Caco-2 (cell line): ENCODE measurements at regions of chr10 and their contacts with region 1.

Region 1: DNA sequence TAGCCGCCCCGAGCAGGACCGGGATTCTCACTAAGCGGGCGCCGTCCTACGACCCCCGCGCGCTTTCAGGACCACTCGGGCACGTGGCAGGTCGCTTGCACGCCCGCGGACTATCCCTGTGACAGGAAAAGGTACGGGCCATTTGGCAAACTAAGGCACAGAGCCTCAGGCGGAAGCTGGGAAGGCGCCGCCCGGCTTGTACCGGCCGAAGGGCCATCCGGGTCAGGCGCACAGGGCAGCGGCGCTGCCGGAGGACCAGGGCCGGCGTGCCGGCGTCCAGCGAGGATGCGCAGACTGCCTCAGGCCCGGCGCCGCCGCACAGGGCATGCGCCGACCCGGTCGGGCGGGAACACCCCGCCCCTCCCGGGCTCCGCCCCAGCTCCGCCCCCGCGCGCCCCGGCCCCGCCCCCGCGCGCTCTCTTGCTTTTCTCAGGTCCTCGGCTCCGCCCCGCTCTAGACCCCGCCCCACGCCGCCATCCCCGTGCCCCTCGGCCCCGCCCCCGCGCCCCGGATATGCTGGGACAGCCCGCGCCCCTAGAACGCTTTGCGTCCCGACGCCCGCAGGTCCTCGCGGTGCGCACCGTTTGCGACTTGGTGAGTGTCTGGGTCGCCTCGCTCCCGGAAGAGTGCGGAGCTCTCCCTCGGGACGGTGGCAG is at the start of gene MGMT:
- DNase-seq: peak; percentile 96
- H3K4me3 ChIP-seq: peak within 1 kb of the TSS; percentile 88
- H3K4me3 Mint-ChIP-seq: peak within 1 kb of the TSS; percentile 82
- H3K27ac Mint-ChIP-seq: peak within 1 kb of the TSS; percentile 70
- H3K4me1 ChIP-seq: peaks cover 67% of the 10 kb centered on the region
- H3K4me1 Mint-ChIP-seq: peaks cover 39% of the 10 kb centered on the region
- H3K27me3 ChIP-seq: no peaks in the 10 kb centered on the region
- H3K27me3 Mint-ChIP-seq: no peaks in the 10 kb centered on the region
- CTCF ChIP-seq: no peak
- total RNA-seq, gene MGMT: 49.3 and 57.0 TPM in 2 replicates

Region 2: DNA sequence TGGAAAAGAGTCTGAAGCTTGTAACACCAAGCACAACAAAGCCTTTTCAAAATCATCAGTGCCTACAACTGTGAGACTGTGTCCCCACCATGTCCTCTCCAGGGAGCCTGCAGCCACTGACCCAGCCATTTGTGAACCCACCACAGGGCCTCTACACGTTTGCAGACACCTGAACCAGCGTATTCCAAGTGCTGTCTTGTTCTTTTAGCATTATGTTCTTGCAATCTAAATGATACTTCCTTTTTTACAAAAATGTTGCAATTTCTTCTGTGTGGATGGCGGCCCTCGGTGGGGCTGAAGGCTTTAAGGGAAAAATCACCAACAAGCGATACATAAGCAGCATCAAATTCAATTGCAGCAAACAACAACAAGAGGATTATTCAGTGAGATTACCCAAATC is 403.0 kb before region 1 on chr10:
- CTCF ChIA-PET with region 1: no interaction called
- POLR2A ChIA-PET with region 1: interaction called, 20 read pairs
- intact Hi-C with region 1: no loop called
- DNase-seq: no peak
- H3K4me3 ChIP-seq: no peak overlapping the region
- H3K4me3 Mint-ChIP-seq: no peak overlapping the region
- H3K27ac Mint-ChIP-seq: no peak overlapping the region
- H3K4me1 ChIP-seq: no peaks in the 10 kb centered on the region
- H3K4me1 Mint-ChIP-seq: no peaks in the 10 kb centered on the region
- H3K27me3 ChIP-seq: no peaks in the 10 kb centered on the region
- H3K27me3 Mint-ChIP-seq: peaks cover 6% of the 10 kb centered on the region
- CTCF ChIP-seq: no peak

Region 3: GRCh38 chr10:129426606-129427005 is 40.2 kb before region 1 on chr10:
- CTCF ChIA-PET with region 1: no interaction called
- POLR2A ChIA-PET with region 1: no interaction called
- intact Hi-C with region 1: loop called (anchors 2 kb)
- DNase-seq: peak in 1 of 2 experiments; percentile 29
- H3K4me3 ChIP-seq: no peak overlapping the region
- H3K4me3 Mint-ChIP-seq: no peak overlapping the region
- H3K27ac Mint-ChIP-seq: peak overlapping the region; percentile 71
- H3K4me1 ChIP-seq: peaks cover 15% of the 10 kb centered on the region
- H3K4me1 Mint-ChIP-seq: peaks cover 5% of the 10 kb centered on the region
- H3K27me3 ChIP-seq: no peaks in the 10 kb centered on the region
- H3K27me3 Mint-ChIP-seq: no peaks in the 10 kb centered on the region
- CTCF ChIP-seq: no peak

Region 4: DNA sequence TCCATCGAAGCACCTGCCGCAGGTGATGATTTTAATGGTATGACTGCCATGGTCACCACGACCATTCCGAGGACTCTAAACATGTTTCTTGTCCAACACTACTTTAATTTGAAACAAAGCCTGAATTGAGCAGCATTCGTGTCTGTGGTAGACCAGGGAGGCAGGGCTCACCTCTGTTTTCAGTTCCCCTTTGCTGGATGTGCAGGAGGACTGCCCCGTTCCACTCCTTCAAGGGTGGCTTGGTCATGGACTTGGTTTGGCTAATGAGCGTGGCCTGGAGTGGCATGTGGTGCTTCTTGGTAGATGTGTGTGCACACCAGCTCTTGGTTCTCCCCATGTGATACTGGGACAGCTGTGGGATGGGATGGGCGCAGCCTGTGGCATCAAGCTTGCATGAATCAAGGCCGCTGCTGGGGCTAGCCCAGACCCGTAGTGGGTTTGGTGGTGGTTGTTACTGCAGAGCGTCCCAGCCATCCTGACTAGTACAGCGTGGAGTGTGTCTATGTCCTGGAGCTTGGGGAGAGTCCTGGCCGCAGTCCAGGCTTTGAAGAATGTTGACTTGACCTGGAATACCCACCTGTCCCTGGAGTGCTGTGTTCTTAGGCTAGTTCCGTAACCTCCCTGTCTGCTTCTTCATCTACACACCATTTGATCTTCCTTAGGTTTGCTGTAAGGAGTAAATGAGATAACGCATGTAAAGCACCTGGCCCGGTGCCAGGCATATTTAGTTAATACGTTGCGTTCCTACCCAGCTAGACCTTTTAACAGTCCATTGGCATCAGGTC is 35.0 kb after region 1 on chr10:
- CTCF ChIA-PET with region 1: no interaction called
- POLR2A ChIA-PET with region 1: interaction called, 7 read pairs
- intact Hi-C with region 1: loop called (anchors 5 kb)
- DNase-seq: no peak
- H3K4me3 ChIP-seq: no peak overlapping the region
- H3K4me3 Mint-ChIP-seq: no peak overlapping the region
- H3K27ac Mint-ChIP-seq: no peak overlapping the region
- H3K4me1 ChIP-seq: peaks cover 45% of the 10 kb centered on the region
- H3K4me1 Mint-ChIP-seq: peaks cover 15% of the 10 kb centered on the region
- H3K27me3 ChIP-seq: no peaks in the 10 kb centered on the region
- H3K27me3 Mint-ChIP-seq: no peaks in the 10 kb centered on the region
- CTCF ChIP-seq: no peak

Region 5: DNA sequence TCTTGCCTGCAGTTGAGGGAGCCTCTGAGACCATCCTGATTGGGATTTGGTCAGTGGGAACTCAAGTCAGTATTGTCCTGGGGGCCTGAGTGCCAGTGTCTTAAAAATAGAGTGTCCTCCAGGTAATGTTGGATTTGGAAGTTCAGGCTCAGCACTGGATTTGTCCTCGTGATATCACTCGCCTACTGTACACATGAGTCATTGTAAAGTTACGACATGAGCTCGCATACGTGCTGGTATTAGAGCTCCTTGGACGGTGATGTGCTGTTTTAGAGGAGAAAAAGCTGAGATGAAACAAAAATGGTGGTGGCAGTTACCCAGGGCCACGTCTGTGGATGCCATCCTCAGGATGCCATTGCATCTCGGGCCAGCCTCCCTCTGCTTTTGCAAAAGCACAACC is 78.4 kb after region 1 on chr10:
- CTCF ChIA-PET with region 1: no interaction called
- POLR2A ChIA-PET with region 1: no interaction called
- intact Hi-C with region 1: loop called (anchors 5 kb)
- DNase-seq: peak in 1 of 2 experiments; percentile 16
- H3K4me3 ChIP-seq: no peak overlapping the region
- H3K4me3 Mint-ChIP-seq: no peak overlapping the region
- H3K27ac Mint-ChIP-seq: peak overlapping the region; percentile 68
- H3K4me1 ChIP-seq: peaks cover 37% of the 10 kb centered on the region
- H3K4me1 Mint-ChIP-seq: peaks cover 33% of the 10 kb centered on the region
- H3K27me3 ChIP-seq: no peaks in the 10 kb centered on the region
- H3K27me3 Mint-ChIP-seq: no peaks in the 10 kb centered on the region
- CTCF ChIP-seq: no peak

Region 6: DNA sequence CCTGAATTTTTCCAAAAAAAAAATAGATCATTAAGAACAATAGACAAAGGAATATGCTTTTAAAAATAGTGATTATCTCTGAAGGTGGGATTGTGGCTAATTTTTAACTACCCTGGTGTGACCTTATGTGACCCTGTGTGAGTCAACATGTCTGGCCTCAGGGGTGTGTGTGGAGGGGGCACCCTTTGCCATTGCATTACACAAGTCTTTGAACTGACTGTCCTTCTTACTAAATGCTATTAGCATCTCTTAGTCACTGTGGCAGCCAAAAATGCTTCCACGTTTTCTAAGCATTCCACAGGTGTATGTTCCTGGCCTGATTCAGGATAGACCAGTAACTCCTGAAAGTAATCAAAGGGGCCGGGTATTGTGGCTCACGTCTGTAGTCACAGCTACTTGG is 175.6 kb after region 1 on chr10:
- CTCF ChIA-PET with region 1: no interaction called
- POLR2A ChIA-PET with region 1: no interaction called
- intact Hi-C with region 1: loop called (anchors 1 kb)
- DNase-seq: peak; percentile 86 to 89
- H3K4me3 ChIP-seq: no peak overlapping the region
- H3K4me3 Mint-ChIP-seq: peak overlapping the region; percentile 5
- H3K27ac Mint-ChIP-seq: peak overlapping the region; percentile 91
- H3K4me1 ChIP-seq: peaks cover 42% of the 10 kb centered on the region
- H3K4me1 Mint-ChIP-seq: peaks cover 30% of the 10 kb centered on the region
- H3K27me3 ChIP-seq: no peaks in the 10 kb centered on the region
- H3K27me3 Mint-ChIP-seq: no peaks in the 10 kb centered on the region
- CTCF ChIP-seq: no peak

Region 7: DNA sequence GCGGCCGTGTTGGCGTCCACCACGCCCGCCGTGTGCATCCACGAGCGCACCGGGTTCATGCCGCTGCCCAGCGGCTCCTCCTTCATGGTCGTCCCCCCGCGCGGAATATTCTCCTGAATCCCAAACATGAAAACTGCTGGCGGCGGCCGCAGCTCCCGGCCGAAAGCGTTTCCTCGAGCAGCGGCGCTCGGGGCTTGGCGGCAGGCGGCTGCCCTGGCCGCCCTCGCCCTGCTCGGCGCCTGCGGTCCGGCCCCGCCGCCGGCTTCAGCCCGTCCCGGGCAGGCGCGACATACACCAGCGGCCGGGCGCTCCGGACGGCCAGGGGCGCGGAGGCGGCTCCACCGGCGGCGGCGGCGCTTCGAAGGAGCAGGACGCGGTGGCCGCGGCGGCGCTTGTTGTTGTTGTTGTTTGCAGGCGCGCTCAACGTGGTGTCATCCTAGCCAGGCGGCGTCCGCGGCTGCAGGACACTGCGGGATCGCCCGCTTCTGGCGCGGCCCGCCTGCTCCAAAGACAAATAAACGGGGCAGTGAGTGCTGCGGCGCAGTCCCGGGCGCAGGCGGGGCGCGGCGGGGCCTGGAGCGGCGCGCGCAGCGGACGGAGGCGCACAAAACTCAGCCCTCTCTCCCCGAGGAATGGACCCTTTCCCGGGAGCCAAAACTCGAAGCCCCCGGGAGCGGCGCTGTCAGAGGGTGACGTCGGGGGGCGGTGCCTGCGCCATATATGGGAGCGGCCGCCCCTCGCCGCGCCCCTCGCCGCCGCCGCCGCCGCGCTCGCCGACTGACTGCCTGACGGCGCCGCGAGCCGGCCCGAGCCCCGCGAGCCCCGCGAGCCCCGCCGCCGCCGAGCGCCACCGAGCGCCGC is 497.0 kb after region 1 on chr10 and contains the start of gene EBF3:
- CTCF ChIA-PET with region 1: no interaction called
- POLR2A ChIA-PET with region 1: no interaction called
- intact Hi-C with region 1: loop called (anchors 10 kb)
- DNase-seq: peak; percentile 59 to 81
- H3K4me3 ChIP-seq: peak within 1 kb of the TSS; percentile 56
- H3K4me3 Mint-ChIP-seq: peak within 1 kb of the TSS; percentile 74
- H3K27ac Mint-ChIP-seq: no peak within 1 kb of the TSS
- H3K4me1 ChIP-seq: peaks cover 16% of the 10 kb centered on the region; the same call in 1 of the 2 replicates
- H3K4me1 Mint-ChIP-seq: no peaks in the 10 kb centered on the region
- H3K27me3 ChIP-seq: peaks cover 4% of the 10 kb centered on the region; the same call in 1 of the 2 replicates
- H3K27me3 Mint-ChIP-seq: peaks cover 33% of the 10 kb centered on the region
- CTCF ChIP-seq: no peak
- total RNA-seq, gene EBF3: 0.63 and 0.79 TPM in 2 replicates